ENCODE measurements at regions of chr13 and their contacts with region 1.

Region 1: GRCh38 chr13:38349390-38350113 is at the start of gene UFM1:
- DNase-seq: peak; percentile 79 to 91 (median 83)
- ATAC-seq: peak; percentile 98
- H3K4me3 ChIP-seq: peak within 1 kb of the TSS; percentile 91
- H3K27ac ChIP-seq: peak within 1 kb of the TSS; percentile 94
- H3K4me1 ChIP-seq: no peaks in the 10 kb centered on the region; a peak in 2 of 5 replicates
- H3K27me3 ChIP-seq: no peaks in the 10 kb centered on the region
- CTCF ChIP-seq: no peak
- EP300 ChIP-seq: no peak
- POLR2A ChIP-seq: peak; percentile 83
- RAD21 ChIP-seq: no peak
- polyA plus RNA-seq, gene UFM1: 54.5 to 58.5 TPM

Region 2: DNA sequence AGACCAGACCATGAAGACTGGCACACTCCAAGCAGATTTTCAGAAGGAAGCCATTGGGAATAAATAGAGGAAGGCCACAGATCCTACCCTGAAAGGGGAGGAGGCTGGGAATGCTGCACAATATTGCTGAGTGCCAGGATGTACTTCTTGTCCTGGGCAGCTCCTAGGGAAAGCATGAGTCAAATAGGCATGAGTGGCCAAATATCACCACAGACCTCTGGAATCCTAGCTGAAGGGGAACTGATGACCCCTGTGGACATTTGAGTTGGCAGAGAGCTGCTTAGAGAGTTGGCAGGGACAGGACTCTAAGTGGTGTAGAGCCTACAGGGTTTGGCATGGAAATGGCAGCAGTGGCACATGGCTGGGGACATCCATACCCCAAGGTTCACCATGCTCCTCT is 245.7 kb before region 1 on chr13:
- CTCF ChIA-PET with region 1: no interaction called
- POLR2A ChIA-PET with region 1: no interaction called
- in situ Hi-C with region 1: no loop called
- intact Hi-C with region 1: no loop called
- DNase-seq: no peak
- ATAC-seq: no peak
- H3K4me3 ChIP-seq: no peak overlapping the region
- H3K27ac ChIP-seq: no peak overlapping the region
- H3K4me1 ChIP-seq: no peaks in the 10 kb centered on the region
- H3K27me3 ChIP-seq: no peaks in the 10 kb centered on the region
- CTCF ChIP-seq: no peak
- EP300 ChIP-seq: no peak
- POLR2A ChIP-seq: no peak
- RAD21 ChIP-seq: no peak

Region 3: DNA sequence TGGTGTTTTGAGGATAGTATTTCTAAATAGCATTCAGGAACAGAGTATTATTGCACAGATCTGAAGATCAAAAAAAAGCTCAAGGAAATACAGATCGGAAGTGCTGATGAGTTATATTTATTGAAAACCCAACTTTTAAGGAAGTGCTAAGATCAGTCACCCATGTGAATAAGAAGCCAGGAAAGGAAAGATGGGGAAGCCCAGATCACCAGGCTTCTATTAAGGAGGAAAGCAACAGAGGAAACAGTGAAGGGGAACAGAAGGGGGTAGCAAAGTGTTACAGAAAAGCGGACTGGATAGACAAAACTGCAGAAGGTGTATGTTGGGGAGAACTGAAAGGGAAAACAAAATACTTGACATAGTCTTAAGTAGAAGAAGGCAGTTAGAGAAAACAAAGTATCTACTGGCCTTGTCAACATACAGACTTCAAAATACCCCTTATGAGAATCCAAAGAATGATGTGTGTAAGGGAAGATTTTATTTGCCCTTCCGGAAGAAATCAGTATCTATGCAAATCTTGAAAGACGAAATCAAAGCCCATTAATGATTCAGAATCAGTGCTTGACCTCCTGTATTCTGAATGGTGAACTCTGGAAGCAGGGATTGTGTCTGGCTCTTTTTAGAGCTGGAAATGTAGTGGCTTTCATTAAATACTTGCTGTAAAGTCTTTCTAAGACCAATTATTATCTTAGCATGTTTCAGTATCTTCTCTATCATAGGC is 12.2 kb after region 1 on chr13:
- CTCF ChIA-PET with region 1: no interaction called
- POLR2A ChIA-PET with region 1: interaction called, 14 read pairs
- in situ Hi-C with region 1: no loop called
- intact Hi-C with region 1: no loop called
- DNase-seq: no peak
- ATAC-seq: no peak
- H3K4me3 ChIP-seq: no peak overlapping the region
- H3K27ac ChIP-seq: no peak overlapping the region
- H3K4me1 ChIP-seq: no peaks in the 10 kb centered on the region
- H3K27me3 ChIP-seq: no peaks in the 10 kb centered on the region
- CTCF ChIP-seq: no peak
- EP300 ChIP-seq: no peak
- POLR2A ChIP-seq: no peak
- RAD21 ChIP-seq: no peak

Measured in K562 (cell line).